BJ (cell line): ENCODE measurements at regions of chr12 and their contacts with region 1.

Region 1: GRCh38 chr12:48995061-48995879 is 3.9 kb downstream of the DDN start:
- DNase-seq: no peak
- H3K4me3 ChIP-seq: no peak overlapping the region
- H3K27me3 ChIP-seq: peaks cover 9% of the 10 kb centered on the region
- CTCF ChIP-seq: peak; percentile 83

Region 2: DNA sequence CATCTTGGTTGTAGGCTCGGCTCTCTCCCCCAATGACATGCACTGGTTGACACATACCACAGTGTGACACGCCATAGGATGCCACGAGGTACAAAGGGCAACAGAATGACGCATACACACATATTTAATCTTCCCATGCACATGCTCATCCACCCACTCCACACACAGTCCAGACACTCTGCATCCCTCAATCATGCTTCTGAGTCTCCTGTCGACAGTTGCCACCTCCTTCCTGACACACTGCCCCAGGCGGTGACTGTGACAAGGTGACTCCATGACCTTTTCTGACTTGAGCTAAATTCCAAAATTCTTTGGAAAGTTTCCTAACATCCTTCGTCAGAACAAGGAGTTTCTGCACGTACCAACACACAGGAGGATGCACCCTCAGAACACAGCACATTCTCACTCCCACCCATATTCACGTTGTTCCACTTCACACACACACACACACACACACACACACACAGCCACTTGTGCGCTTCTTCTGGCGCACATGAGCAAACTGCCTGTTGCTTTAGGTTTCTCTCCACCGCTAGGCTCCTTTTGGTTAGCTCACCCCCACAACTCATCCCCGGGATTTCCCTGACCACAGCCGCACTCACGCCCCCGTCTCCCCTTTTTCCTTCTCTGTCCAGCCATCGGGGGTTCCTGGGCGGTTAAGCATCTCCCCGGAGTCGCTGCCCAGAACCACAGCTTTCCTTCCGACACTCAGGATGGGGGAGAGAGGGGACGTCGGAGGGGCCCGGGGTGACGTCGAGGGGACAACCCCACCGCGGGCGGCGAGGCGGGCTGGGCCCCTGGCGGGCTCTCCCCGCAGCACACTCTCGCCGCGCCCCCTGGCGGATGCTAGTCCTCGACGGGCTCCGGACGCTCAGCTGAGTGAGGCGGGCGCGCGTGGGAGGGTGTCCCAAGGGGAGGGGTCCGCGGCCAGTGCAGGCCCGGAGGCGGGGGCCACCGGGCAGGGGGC is 17.7 kb before region 1 on chr12:
- CTCF ChIA-PET with region 1: interaction called, 757 read pairs
- POLR2A ChIA-PET with region 1: interaction called, 3 read pairs
- DNase-seq: no peak
- H3K4me3 ChIP-seq: no peak overlapping the region
- H3K27me3 ChIP-seq: peaks cover 47% of the 10 kb centered on the region
- CTCF ChIP-seq: peak; percentile 62

Region 3: GRCh38 chr12:49170924-49171323 is 175.7 kb after region 1 on chr12:
- CTCF ChIA-PET with region 1: no interaction called
- POLR2A ChIA-PET with region 1: no interaction called
- DNase-seq: no peak
- H3K4me3 ChIP-seq: no peak overlapping the region
- H3K27me3 ChIP-seq: no peaks in the 10 kb centered on the region
- CTCF ChIP-seq: no peak

Region 4: DNA sequence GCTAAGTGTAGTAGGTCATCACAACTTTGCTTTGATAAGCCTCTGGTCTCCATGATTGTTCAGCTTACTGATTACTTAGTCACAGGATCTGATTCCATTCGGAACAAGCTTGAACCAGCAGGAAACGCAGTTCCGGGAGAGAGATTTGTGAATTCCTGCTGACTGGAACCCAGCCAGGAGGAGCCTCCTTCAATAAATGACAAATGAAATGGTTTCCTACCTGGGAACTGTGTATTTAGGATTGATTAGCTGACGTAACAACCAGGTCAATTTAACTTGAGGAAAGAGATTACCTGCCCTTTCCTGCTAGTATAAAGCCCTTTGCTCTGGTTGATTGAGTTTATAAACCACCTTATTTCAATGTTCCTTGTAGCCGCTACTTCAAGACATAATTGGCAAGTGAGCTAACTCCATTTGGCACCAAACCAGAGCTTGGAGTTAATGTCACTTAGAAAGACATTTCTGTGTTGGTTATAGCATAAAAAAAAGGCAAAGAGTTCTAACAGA is 508.5 kb after region 1 on chr12:
- CTCF ChIA-PET with region 1: no interaction called
- POLR2A ChIA-PET with region 1: no interaction called
- DNase-seq: no peak
- H3K4me3 ChIP-seq: no peak overlapping the region
- H3K27me3 ChIP-seq: no peaks in the 10 kb centered on the region
- CTCF ChIP-seq: no peak